ENCODE measurements at regions of chr17 and their contacts with region 1.

Region 1: GRCh38 chr17:63549946-63550807 is at the start of gene DCAF7:
- DNase-seq: peak; percentile 100
- ATAC-seq: peak; percentile 94
- H3K4me3 Mint-ChIP-seq: peak within 1 kb of the TSS; percentile 91
- H3K27ac Mint-ChIP-seq: peak within 1 kb of the TSS; percentile 96
- H3K4me1 Mint-ChIP-seq: peaks cover 32% of the 10 kb centered on the region
- H3K27me3 Mint-ChIP-seq: no peaks in the 10 kb centered on the region
- total RNA-seq, gene DCAF7: 106 to 117 TPM

Region 2: DNA sequence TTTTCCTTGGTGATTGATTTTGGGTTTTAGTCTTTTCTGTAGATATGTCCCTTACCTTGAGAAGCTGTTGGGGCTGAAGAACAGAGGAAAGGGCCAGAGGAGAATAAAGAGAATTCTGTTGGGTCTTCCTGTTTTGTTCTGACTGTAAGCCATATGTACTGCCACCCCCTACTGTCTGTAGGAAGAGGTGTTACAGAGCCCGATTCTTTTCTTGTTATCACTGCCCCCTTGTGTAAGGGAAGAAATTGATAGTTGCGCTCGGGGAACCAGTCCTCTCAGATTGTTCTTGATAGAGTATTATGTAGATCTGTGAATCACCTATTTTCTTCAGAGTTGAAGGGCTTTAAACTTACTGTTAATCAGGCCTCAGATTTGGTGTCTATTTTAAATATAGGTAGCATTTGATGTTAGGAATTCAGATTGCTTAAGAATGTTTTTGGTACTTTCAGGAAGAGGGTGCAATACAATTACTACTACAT is 581.7 kb before region 1 on chr17:
- CTCF ChIA-PET with region 1: no interaction called
- POLR2A ChIA-PET with region 1: no interaction called
- intact Hi-C with region 1: loop called in 1 of 2 experiments (anchors 5 kb)
- DNase-seq: peak; percentile 62
- ATAC-seq: peak; percentile 67
- H3K4me3 Mint-ChIP-seq: no peak overlapping the region
- H3K27ac Mint-ChIP-seq: no peak overlapping the region
- H3K4me1 Mint-ChIP-seq: peaks cover 26% of the 10 kb centered on the region
- H3K27me3 Mint-ChIP-seq: peaks cover 16% of the 10 kb centered on the region

Region 3: DNA sequence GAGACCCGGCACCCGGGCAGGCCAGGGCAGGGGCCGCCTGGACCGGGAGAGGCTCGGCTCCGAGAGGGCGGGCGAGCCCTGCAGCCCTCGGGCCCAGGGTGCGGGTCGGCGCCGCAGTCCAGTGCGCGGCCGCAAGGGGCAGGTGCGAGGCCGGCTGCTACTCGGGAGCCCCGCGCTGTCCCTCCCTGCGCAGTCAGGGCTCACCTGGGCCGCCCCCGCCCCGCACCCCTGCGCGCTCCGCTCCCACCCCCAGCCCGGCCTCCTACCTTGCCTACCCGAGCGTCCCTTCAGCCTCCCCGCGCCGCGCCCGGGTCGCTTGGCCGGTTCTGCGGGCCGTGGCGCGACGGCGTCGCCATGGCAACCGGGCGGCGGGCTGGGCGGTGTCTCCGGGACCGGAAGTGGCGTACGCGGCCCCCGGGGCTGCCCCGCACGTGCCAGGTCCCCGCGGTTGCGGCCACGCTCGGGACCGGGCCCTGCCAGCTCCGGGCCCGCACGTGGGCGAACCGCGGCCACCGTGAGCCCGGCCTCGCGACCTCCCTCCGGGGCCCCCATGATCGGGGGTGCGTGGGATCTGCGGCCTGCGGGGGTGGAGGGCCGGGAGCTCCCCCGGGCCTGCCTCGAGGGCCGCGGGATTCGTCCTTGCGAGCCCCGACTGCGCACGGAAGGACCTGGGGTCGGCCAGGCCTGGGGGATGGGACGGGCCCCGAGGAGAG is 104.0 kb before region 1 on chr17 and contains the start of gene CYB561:
- CTCF ChIA-PET with region 1: no interaction called
- POLR2A ChIA-PET with region 1: interaction called, 9 read pairs
- intact Hi-C with region 1: loop called in 1 of 2 experiments (anchors 1 kb)
- DNase-seq: peak; percentile 81
- ATAC-seq: peak; percentile 69
- H3K4me3 Mint-ChIP-seq: peak within 1 kb of the TSS; percentile 60
- H3K27ac Mint-ChIP-seq: peak within 1 kb of the TSS; percentile 72
- H3K4me1 Mint-ChIP-seq: peaks cover 23% of the 10 kb centered on the region
- H3K27me3 Mint-ChIP-seq: peaks cover 3% of the 10 kb centered on the region
- total RNA-seq, gene CYB561: 2.5 to 3.0 TPM

Region 4: GRCh38 chr17:63600569-63601438 is 50.6 kb after region 1 on chr17 and contains the start of gene TACO1:
- CTCF ChIA-PET with region 1: interaction called, 3 read pairs
- POLR2A ChIA-PET with region 1: interaction called, 5 read pairs
- intact Hi-C with region 1: loop called (anchors 1 to 2 kb)
- DNase-seq: peak; percentile 87
- ATAC-seq: peak; percentile 94
- H3K4me3 Mint-ChIP-seq: peak within 1 kb of the TSS; percentile 97
- H3K27ac Mint-ChIP-seq: peak within 1 kb of the TSS; percentile 95
- H3K4me1 Mint-ChIP-seq: peaks cover 31% of the 10 kb centered on the region
- H3K27me3 Mint-ChIP-seq: no peaks in the 10 kb centered on the region
- total RNA-seq, gene TACO1: 25.7 to 29.2 TPM

Region 5: DNA sequence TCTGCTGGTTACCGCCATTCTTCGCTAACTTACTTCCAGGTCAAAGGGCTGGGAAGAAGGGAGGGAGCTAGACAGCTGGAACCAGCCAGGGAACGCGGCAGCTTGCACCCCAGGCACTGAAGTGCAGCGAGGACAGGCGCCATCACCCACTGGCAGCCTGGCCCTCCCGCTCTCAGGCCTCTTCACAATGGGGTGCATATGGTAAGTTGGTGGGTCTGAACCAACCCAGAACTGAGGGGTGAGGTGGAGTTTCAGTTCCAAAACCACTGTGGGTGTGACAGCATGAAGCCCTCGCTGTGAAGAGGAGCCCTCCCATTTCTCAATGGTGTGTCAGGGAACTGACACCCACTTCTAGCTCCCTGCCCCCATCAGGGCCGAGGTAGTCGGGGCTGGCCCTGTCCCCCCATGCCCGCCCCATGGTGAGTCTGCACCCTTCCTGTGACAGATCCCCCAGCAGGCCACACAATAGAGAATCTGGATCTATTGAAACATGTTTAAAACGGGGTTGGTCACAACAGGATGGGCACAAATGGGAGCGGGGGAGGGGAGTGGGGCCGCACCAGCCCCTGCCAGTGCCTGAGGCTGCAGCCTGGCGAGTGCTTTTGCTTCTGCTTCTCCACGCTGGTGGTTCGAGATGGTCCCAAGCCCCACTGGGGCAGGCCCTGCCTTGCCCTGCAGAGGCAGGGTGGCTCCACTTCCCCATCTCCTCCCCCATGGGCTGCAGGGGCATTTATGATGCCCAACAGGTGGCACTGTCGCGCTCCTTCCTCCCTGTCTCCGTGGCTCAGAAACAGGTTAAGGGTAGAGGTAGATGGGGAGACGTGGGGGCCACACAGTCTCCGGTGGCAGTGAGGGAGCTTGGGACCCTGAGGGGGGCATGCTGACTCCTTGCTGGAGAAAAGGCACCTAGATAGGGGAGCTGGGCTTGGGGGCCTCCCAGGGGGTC is 147.4 kb after region 1 on chr17:
- CTCF ChIA-PET with region 1: no interaction called
- POLR2A ChIA-PET with region 1: interaction called, 4 read pairs
- intact Hi-C with region 1: loop called in 1 of 2 experiments (anchors 1 kb)
- DNase-seq: peak; percentile 90
- ATAC-seq: peak; percentile 42
- H3K4me3 Mint-ChIP-seq: peak overlapping the region; percentile 79
- H3K27ac Mint-ChIP-seq: peak overlapping the region; percentile 88
- H3K4me1 Mint-ChIP-seq: peaks cover 64% of the 10 kb centered on the region
- H3K27me3 Mint-ChIP-seq: no peaks in the 10 kb centered on the region

Region 6: DNA sequence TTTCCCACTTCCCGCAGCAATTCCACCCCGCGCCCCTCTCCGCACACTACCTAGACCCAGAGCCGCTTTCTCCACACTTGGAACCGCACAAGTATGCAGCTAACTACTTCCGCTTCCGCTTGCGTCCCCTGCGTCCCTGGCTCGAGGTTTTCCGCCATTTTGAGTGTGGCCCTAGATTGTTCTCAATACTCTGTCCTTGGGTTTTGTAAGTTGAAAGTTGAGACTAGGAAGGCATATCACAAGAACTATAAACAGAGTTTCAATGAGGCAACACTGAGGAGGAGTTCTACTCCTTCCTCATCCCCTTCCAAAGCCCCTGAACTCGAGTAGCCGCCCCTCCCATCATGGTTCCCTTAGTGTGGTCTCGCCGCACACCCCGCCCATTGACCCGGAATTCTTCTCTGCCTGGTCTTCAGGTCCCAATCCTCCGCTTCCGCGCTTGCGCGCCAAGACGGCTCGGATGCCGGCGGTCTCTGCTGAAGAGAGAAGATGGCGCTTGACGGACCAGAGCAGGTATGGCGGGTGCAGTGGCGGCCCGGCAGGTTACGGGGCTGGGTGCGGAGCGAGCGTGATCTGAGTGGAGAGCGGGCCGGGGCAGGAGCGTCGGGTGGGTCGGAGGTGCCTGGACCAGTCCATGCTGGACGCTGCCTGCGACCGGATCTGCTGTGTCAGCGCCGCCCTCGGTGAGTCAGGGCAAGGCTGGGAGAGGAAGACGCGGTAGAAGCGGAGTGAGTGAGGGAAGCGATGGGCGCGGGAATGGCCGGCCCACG is 277.0 kb after region 1 on chr17 and contains the starts of genes FTSJ3 and PSMC5:
- CTCF ChIA-PET with region 1: no interaction called
- POLR2A ChIA-PET with region 1: no interaction called
- intact Hi-C with region 1: loop called (anchors 1 to 10 kb)
- DNase-seq: peak; percentile 97
- ATAC-seq: peak; percentile 94
- H3K4me3 Mint-ChIP-seq: peak within 1 kb of the TSS; percentile 88
- H3K27ac Mint-ChIP-seq: peak within 1 kb of the TSS; percentile 99
- H3K4me1 Mint-ChIP-seq: peaks cover 72% of the 10 kb centered on the region
- H3K27me3 Mint-ChIP-seq: no peaks in the 10 kb centered on the region
- total RNA-seq, gene FTSJ3: 52.1 to 61.2 TPM
- total RNA-seq, gene PSMC5: 98.2 to 160 TPM

Measured in activated CD4-positive, alpha-beta T cell treated with anti-CD3 and anti-CD28 coated beads for 36 hours (primary cell).